B cell (primary cell): ENCODE measurements at regions of chr19 and their contacts with region 1.

Region 1: GRCh38 chr19:49546825-49547565 is 19.2 kb downstream of the RCN3 start:
- DNase-seq: peak; percentile 88
- ATAC-seq: peak; percentile 63
- H3K4me3 ChIP-seq: peak overlapping the region in 2 of 5 experiments; percentile 1 to 18
- H3K4me3 Mint-ChIP-seq: peak overlapping the region; percentile 73
- H3K27ac ChIP-seq: no peak overlapping the region
- H3K27ac Mint-ChIP-seq: peak overlapping the region; percentile 79
- H3K4me1 ChIP-seq: peaks cover 4 to 8% of the 10 kb centered on the region in 2 donors
- H3K4me1 Mint-ChIP-seq: peaks cover 13% of the 10 kb centered on the region
- H3K27me3 ChIP-seq: no peaks in the 10 kb centered on the region
- H3K27me3 Mint-ChIP-seq: no peaks in the 10 kb centered on the region
- CTCF ChIP-seq: peak; percentile 91

Region 2: DNA sequence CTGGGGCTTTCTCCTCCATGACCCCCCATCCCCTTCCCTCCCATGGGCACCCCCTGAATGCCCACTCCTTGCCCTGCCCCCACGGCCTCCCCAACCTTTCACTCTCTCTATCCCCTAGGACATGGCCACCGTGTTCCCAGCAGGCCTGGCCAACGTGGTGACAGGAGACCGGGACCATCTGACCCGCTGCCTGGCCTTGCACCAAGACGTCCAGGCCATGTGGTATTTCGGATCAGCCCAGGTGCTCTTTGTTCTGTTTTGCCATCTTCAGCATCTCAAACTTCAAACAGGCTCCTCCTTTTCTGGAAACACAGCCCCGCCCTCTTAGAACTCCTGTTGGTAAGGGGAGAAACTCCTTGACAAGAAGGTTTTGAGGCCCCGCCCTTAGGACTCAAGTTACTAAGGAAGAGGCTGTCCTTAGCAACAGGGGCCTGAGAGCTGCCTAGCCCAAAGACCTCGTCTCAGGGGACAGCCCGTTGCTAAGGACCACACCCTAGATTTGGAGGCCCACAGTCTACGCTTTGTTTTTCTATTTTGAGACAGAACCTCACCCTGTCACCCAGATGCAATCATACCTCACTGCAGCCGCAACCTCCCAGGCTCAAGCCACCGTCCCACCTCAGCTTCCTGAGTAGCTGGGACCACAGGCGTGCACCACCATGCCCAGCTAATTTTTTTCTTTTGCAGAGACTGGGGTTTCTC is 78.1 kb before region 1 on chr19:
- CTCF ChIA-PET with region 1: interaction called, 46 read pairs
- POLR2A ChIA-PET with region 1: no interaction called
- intact Hi-C with region 1: loop called (anchors 1 kb)
- DNase-seq: peak; percentile 98
- ATAC-seq: peak; percentile 75
- H3K4me3 ChIP-seq: peak overlapping the region in 1 of 5 experiments; percentile 18
- H3K4me3 Mint-ChIP-seq: peak overlapping the region; percentile 74
- H3K27ac ChIP-seq: peak overlapping the region; percentile 96 to 98
- H3K27ac Mint-ChIP-seq: peak overlapping the region; percentile 98
- H3K4me1 ChIP-seq: peaks cover 44 to 57% of the 10 kb centered on the region in 2 donors
- H3K4me1 Mint-ChIP-seq: peaks cover 41% of the 10 kb centered on the region
- H3K27me3 ChIP-seq: no peaks in the 10 kb centered on the region
- H3K27me3 Mint-ChIP-seq: no peaks in the 10 kb centered on the region
- CTCF ChIP-seq: no peak

Region 3: GRCh38 chr19:49502866-49503581 is 44.0 kb before region 1 on chr19:
- CTCF ChIA-PET with region 1: interaction called, 3 read pairs
- POLR2A ChIA-PET with region 1: interaction called, 9 read pairs
- intact Hi-C with region 1: loop called (anchors 1 kb)
- DNase-seq: peak; percentile 72
- ATAC-seq: no peak
- H3K4me3 ChIP-seq: no peak overlapping the region
- H3K4me3 Mint-ChIP-seq: no peak overlapping the region
- H3K27ac ChIP-seq: peak overlapping the region; percentile 89 to 98
- H3K27ac Mint-ChIP-seq: peak overlapping the region; percentile 99
- H3K4me1 ChIP-seq: peaks cover 31 to 55% of the 10 kb centered on the region in 2 donors
- H3K4me1 Mint-ChIP-seq: peaks cover 51% of the 10 kb centered on the region
- H3K27me3 ChIP-seq: no peaks in the 10 kb centered on the region
- H3K27me3 Mint-ChIP-seq: no peaks in the 10 kb centered on the region
- CTCF ChIP-seq: peak; percentile 70

Region 4: GRCh38 chr19:49520705-49521319 is 26.2 kb before region 1 on chr19:
- CTCF ChIA-PET with region 1: interaction called, 13 read pairs
- POLR2A ChIA-PET with region 1: interaction called, 4 read pairs
- intact Hi-C with region 1: no loop called
- DNase-seq: no peak
- ATAC-seq: no peak
- H3K4me3 ChIP-seq: no peak overlapping the region
- H3K4me3 Mint-ChIP-seq: no peak overlapping the region
- H3K27ac ChIP-seq: no peak overlapping the region
- H3K27ac Mint-ChIP-seq: no peak overlapping the region
- H3K4me1 ChIP-seq: peaks cover 0 to 2% of the 10 kb centered on the region in 2 donors
- H3K4me1 Mint-ChIP-seq: peaks cover 7% of the 10 kb centered on the region
- H3K27me3 ChIP-seq: no peaks in the 10 kb centered on the region
- H3K27me3 Mint-ChIP-seq: no peaks in the 10 kb centered on the region
- CTCF ChIP-seq: no peak

Region 5: DNA sequence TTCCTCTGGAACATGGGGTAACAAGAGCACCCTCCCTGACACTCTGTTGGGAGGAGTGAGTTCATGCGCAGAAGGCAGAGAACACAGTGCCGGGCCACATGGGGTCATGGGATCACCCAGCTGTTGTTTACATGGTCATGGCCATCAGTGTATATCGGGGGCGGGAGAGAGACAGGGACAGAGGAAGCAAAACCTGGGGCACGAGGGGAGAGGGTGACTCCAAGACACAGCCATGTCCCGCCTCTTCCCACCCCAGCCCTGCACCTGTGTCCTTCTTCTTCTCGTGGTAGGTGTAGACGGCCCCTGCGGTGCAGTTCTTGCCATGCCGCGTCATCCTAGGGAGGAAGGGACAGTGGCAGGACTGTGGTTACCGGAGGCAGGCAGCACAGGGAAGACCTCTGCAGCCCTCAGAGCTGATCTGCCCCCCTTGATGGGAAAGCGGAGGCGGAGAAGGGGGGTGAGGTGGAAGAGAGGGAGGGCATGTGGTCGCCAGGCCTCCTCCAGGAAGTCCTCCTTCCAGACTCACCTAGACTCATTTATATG is 13.4 kb after region 1 on chr19:
- CTCF ChIA-PET with region 1: interaction called, 54 read pairs
- POLR2A ChIA-PET with region 1: interaction called, 6 read pairs
- intact Hi-C with region 1: no loop called
- DNase-seq: peak; percentile 60
- ATAC-seq: peak; percentile 67
- H3K4me3 ChIP-seq: no peak overlapping the region
- H3K4me3 Mint-ChIP-seq: peak overlapping the region; percentile 47
- H3K27ac ChIP-seq: peak overlapping the region in 1 of 2 donors; percentile 59
- H3K27ac Mint-ChIP-seq: peak overlapping the region; percentile 85
- H3K4me1 ChIP-seq: peaks cover 19 to 39% of the 10 kb centered on the region in 2 donors
- H3K4me1 Mint-ChIP-seq: peaks cover 39% of the 10 kb centered on the region
- H3K27me3 ChIP-seq: no peaks in the 10 kb centered on the region
- H3K27me3 Mint-ChIP-seq: no peaks in the 10 kb centered on the region
- CTCF ChIP-seq: no peak